ENCODE measurements at regions of chr10 and their contacts with region 1.

Region 1: DNA sequence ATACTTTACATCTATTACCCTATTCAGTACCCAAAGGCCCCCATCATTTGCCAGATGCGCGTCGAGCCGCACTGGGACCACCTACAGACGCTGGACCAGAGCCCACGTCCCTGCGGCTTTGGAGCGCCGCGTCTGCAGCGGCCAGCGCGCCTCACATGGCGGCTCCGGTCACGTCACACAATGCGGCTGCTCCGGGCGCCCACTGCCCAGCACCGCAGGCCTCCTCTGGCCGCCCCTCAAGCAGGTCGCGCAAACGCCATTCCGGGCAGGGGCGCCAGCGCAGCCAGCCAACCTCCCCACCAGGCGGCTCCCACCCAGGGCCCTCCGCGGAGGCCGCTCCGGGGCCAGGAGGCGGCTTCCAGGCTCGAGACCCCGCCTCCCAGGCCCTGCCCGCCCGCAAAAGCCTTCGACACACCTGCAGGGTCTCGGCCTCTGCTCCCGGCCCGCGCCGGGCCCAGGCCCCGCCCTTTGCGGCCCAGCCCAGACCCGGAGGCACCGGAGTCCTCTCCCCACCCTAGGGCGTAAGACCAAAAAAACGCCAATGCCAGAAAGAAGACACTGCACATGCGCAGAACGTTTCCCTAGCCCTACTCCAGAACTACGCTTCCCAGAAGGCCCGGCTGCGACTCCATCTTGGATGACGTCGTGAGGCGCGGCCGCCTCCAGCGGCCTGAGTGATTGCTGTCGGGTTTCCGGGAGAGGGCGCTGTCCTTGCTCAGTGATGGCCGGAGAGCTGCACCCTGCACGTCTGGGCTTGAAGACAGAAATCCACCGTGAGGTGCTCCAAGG is at the start of gene ZNF25:
- DNase-seq: peak; percentile 98 to 99
- H3K4me3 ChIP-seq: peak within 1 kb of the TSS; percentile 88 to 96 (median 95)
- H3K27ac ChIP-seq: peak within 1 kb of the TSS; percentile 99
- H3K4me1 ChIP-seq: no peaks in the 10 kb centered on the region
- H3K27me3 ChIP-seq: no peaks in the 10 kb centered on the region
- CTCF ChIP-seq: peak; percentile 85 to 95 (median 91)
- POLR2A ChIP-seq: peak; percentile 63
- total RNA-seq, gene ZNF25: 13.8 to 23.4 (median 16.0) TPM

Region 2: GRCh38 chr10:38038107-38038931 is 62.0 kb after region 1 on chr10:
- intact Hi-C with region 1: loop called (anchors 2 kb)
- DNase-seq: no peak
- H3K4me3 ChIP-seq: no peak overlapping the region
- H3K27ac ChIP-seq: no peak overlapping the region
- H3K4me1 ChIP-seq: no peaks in the 10 kb centered on the region
- H3K27me3 ChIP-seq: no peaks in the 10 kb centered on the region
- CTCF ChIP-seq: no peak
- POLR2A ChIP-seq: no peak

Measured in breast epithelium (tissue), 4 donors.